ENCODE measurements at regions of chr1 and their contacts with region 1.

Region 1: GRCh38 chr1:35564037-35564883 is 6.7 kb downstream of the NCDN start:
- DNase-seq: peak; percentile 68 to 83
- ATAC-seq: peak in 7 of 8 donors; percentile 23 to 63 (median 38)
- H3K4me3 ChIP-seq: no peak overlapping the region
- H3K27ac ChIP-seq: no peak overlapping the region
- H3K4me1 ChIP-seq: peaks cover 0 to 33% (median 10%) of the 10 kb centered on the region in 9 donors
- H3K27me3 ChIP-seq: peaks cover 0 to 2% (median 0%) of the 10 kb centered on the region in 7 donors
- CTCF ChIP-seq: peak; percentile 67 to 87 (median 79)

Region 2: DNA sequence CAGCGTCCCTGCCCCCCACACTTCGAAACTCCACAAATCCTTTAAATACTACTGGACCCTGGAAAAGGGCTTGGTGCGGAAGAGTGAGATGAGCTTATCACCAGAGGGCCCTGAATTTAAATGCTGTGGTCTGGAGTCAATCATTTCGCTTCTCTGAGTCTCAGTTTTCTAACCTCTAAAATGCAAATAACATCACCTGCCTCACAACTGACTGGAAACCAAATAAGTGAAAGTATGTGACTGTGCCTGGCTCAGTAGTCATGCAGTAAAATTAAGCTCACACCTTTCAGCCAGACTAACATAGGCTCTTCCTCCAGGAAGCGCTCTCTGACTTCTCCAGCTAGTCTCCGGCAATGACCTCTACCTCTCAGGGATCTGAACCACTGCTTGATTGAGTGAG is 767.3 kb before region 1 on chr1:
- intact Hi-C with region 1: loop called in 1 of 10 experiments (anchors 5 kb)
- DNase-seq: no peak
- ATAC-seq: no peak
- H3K4me3 ChIP-seq: peak overlapping the region in 9 of 10 donors; percentile 51 to 75 (median 61)
- H3K27ac ChIP-seq: peak overlapping the region in 9 of 10 donors; percentile 46 to 92 (median 50)
- H3K4me1 ChIP-seq: peaks cover 7 to 47% (median 16%) of the 10 kb centered on the region in 9 donors
- H3K27me3 ChIP-seq: peaks cover 0 to 16% (median 0%) of the 10 kb centered on the region in 7 donors
- CTCF ChIP-seq: no peak

Region 3: GRCh38 chr1:35192853-35193664 is 371.2 kb before region 1 on chr1 and contains the start of gene SFPQ:
- intact Hi-C with region 1: loop called in 3 of 10 experiments (anchors 5 to 10 kb)
- DNase-seq: peak; percentile 92 to 98
- ATAC-seq: peak; percentile 95 to 99 (median 98)
- H3K4me3 ChIP-seq: peak within 1 kb of the TSS; percentile 82 to 100 (median 98)
- H3K27ac ChIP-seq: peak within 1 kb of the TSS; percentile 96 to 100 (median 99)
- H3K4me1 ChIP-seq: peaks cover 9 to 41% (median 37%) of the 10 kb centered on the region in 9 donors
- H3K27me3 ChIP-seq: no peaks in the 10 kb centered on the region
- CTCF ChIP-seq: no peak
- total RNA-seq, gene SFPQ: 80.0 to 112 (median 95.2) TPM

Region 4: DNA sequence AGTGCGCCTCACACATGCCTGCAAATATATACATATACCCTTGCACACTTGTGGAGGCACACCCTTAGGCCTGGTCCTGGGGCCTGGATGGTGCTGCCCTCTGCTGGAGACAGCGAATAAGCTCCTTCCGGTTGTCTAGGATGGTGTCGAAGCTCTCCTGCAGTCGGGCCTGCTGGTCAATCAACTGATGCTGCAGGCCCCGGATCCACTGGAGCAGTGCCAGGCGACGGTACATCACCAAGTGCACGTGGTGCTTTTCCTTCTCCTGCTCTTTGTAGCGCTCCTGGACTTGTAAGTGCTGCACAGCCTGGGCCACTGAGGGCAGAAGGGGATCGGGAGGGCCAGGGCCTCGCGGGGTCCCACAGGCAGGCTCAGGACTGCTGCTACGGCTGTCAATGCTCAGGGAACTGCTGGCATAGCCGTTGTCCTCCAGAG is 151.3 kb after region 1 on chr1:
- intact Hi-C with region 1: loop called in 2 of 10 experiments (anchors 5 kb)
- DNase-seq: peak; percentile 58 to 63
- ATAC-seq: peak; percentile 30 to 64 (median 53)
- H3K4me3 ChIP-seq: no peak overlapping the region
- H3K27ac ChIP-seq: no peak overlapping the region
- H3K4me1 ChIP-seq: peaks cover 4 to 41% (median 32%) of the 10 kb centered on the region in 9 donors
- H3K27me3 ChIP-seq: no peaks in the 10 kb centered on the region
- CTCF ChIP-seq: peak; percentile 66 to 92 (median 85)

Region 5: GRCh38 chr1:35726450-35727433 is 162.5 kb after region 1 on chr1:
- intact Hi-C with region 1: loop called in 9 of 10 experiments (anchors 2 to 5 kb)
- DNase-seq: peak; percentile 22 to 33
- ATAC-seq: peak; percentile 81 to 93 (median 88)
- H3K4me3 ChIP-seq: no peak overlapping the region
- H3K27ac ChIP-seq: no peak overlapping the region
- H3K4me1 ChIP-seq: no peaks in the 10 kb centered on the region
- H3K27me3 ChIP-seq: no peaks in the 10 kb centered on the region
- CTCF ChIP-seq: peak; percentile 81 to 91 (median 88)

Region 6: DNA sequence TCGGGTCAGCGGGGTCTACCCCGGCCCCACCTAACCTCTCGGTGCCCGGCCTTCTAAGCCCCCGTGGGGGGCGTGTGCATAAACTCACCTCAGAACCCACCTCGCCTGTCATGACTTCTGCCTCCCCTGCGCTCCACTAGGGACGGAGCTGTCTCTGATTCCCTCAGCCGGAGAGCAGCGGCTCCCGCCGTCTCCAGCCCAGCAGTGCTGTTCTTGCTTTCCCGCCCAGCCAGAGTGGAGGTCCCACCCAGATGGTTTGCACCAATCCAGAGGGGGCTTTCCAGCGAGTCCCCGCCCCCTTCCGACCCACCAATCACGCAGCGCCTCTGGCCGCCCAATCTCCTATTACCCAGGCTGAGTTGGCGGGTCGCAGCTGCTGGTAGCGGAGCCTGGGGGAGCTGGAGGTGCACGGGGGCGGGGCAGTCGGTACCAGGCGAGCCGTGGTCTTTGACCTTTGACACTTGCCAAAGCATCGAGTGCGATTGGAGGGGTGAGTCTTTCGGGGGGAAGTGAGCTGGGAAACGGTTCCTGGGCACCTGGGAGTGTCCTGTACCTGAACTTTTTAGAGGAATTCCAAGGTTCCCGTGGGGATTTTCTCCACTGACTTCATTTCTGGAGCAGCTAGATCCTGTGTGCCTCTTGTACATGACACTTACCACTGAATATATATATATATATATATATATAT is 205.6 kb after region 1 on chr1 and contains the start of gene CLSPN:
- intact Hi-C with region 1: loop called in 8 of 10 experiments (anchors 2 to 10 kb)
- DNase-seq: peak; percentile 94 to 96
- ATAC-seq: peak; percentile 99 to 100 (median 99)
- H3K4me3 ChIP-seq: peak within 1 kb of the TSS; percentile 61 to 95 (median 76)
- H3K27ac ChIP-seq: peak within 1 kb of the TSS in 9 of 10 donors; percentile 67 to 86 (median 85)
- H3K4me1 ChIP-seq: peaks cover 0 to 14% (median 6%) of the 10 kb centered on the region in 9 donors
- H3K27me3 ChIP-seq: no peaks in the 10 kb centered on the region
- CTCF ChIP-seq: no peak
- total RNA-seq, gene CLSPN: 0.26 to 2.8 (median 0.43) TPM

Region 7: DNA sequence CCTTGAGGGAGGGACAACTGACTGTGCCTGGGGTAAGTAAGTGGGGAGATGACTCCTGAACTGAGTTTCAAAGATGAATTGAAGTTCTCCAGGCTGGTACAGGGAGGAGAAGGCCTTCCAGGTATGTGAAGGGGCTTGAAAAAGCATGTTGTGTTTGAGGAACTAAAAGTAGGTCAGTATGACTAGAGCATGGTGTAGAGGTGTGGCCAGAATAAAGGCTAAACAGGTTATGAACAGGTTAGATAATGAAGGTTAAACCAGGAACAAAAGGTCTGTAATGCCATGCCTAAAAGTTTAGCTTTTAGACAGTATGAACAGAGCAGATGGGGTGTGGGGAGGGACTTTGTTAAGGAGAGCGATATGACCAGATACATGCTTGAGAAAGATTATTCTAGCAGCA is 212.8 kb after region 1 on chr1:
- intact Hi-C with region 1: loop called in 8 of 10 experiments (anchors 2 to 10 kb)
- DNase-seq: no peak
- ATAC-seq: no peak
- H3K4me3 ChIP-seq: no peak overlapping the region
- H3K27ac ChIP-seq: no peak overlapping the region
- H3K4me1 ChIP-seq: no peaks in the 10 kb centered on the region
- H3K27me3 ChIP-seq: no peaks in the 10 kb centered on the region
- CTCF ChIP-seq: no peak